CD8-positive, alpha-beta memory T cell (primary cell): ENCODE measurements at regions of chr1 and their contacts with region 1.

Region 1: GRCh38 chr1:77978969-77979876 is at the start of gene FUBP1:
- DNase-seq: peak; percentile 88 to 98 (median 96)
- H3K4me3 ChIP-seq: peak within 1 kb of the TSS; percentile 87
- H3K4me3 Mint-ChIP-seq: no peak within 1 kb of the TSS
- H3K27ac ChIP-seq: peak within 1 kb of the TSS; percentile 98
- H3K27ac Mint-ChIP-seq: no peak within 1 kb of the TSS
- H3K4me1 ChIP-seq: peaks cover 48% of the 10 kb centered on the region
- H3K4me1 Mint-ChIP-seq: peaks cover 43 to 52% (median 51%) of the 10 kb centered on the region in 3 donors
- H3K27me3 ChIP-seq: no peaks in the 10 kb centered on the region
- H3K27me3 Mint-ChIP-seq: no peaks in the 10 kb centered on the region
- total RNA-seq, gene FUBP1: 215 to 217 TPM

Region 2: DNA sequence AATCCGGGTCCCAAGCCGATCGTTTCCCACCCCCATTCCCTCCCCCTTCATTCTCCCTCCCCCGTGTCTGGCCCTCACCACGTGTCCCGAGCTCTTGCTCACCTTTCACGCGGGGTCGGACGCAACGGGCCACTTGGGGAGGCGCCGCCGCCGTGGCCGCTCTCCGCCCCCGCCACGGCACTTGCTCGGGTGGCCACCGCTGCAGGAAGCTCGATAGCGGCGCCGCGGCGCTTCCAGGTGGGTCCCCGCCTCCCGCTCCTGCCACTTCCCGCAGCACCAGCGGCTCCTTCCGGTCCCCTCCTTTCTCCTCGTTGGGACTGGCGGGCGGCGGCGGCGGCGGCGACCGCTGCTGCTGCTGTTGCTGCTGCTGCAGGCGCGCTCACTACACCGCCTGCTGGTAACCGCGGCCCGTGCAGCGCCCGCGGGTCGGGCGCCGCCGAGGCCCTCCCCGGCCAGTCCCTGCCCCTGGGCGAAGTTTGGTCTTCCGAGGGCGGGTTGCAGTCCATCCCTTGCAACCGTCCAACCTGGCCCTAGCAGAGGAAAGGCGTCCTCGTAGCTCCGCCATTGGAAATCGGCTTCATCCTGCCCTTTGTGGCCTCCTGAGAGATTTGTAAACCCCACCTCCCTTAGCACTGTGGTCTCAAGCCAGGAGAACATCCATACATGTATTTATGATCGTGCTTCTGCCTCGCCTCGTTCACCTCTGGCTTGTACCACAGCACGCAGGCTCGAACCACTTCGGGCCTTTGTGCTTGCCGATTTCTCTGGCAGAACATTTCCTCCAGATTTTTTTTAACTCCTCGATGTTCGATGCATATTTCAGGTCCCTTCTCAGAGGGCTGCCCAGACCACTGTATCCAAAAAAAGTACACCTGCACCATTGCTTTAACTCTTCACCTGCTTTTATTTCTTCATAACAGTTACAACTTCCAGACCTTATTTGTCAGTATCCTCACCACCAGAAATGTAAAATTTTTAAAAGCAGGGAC is 295.8 kb before region 1 on chr1:
- CTCF ChIA-PET with region 1: interaction called, 7 read pairs
- POLR2A ChIA-PET with region 1: interaction called, 20 read pairs
- DNase-seq: peak; percentile 90 to 95 (median 93)
- H3K4me3 ChIP-seq: peak overlapping the region; percentile 64
- H3K4me3 Mint-ChIP-seq: peak overlapping the region; percentile 89 to 98 (median 96)
- H3K27ac ChIP-seq: peak overlapping the region; percentile 84
- H3K27ac Mint-ChIP-seq: peak overlapping the region; percentile 93 to 98 (median 96)
- H3K4me1 ChIP-seq: peaks cover 31% of the 10 kb centered on the region
- H3K4me1 Mint-ChIP-seq: peaks cover 30 to 49% (median 40%) of the 10 kb centered on the region in 3 donors
- H3K27me3 ChIP-seq: no peaks in the 10 kb centered on the region
- H3K27me3 Mint-ChIP-seq: peaks cover 0 to 3% of the 10 kb centered on the region in 2 donors

Region 3: DNA sequence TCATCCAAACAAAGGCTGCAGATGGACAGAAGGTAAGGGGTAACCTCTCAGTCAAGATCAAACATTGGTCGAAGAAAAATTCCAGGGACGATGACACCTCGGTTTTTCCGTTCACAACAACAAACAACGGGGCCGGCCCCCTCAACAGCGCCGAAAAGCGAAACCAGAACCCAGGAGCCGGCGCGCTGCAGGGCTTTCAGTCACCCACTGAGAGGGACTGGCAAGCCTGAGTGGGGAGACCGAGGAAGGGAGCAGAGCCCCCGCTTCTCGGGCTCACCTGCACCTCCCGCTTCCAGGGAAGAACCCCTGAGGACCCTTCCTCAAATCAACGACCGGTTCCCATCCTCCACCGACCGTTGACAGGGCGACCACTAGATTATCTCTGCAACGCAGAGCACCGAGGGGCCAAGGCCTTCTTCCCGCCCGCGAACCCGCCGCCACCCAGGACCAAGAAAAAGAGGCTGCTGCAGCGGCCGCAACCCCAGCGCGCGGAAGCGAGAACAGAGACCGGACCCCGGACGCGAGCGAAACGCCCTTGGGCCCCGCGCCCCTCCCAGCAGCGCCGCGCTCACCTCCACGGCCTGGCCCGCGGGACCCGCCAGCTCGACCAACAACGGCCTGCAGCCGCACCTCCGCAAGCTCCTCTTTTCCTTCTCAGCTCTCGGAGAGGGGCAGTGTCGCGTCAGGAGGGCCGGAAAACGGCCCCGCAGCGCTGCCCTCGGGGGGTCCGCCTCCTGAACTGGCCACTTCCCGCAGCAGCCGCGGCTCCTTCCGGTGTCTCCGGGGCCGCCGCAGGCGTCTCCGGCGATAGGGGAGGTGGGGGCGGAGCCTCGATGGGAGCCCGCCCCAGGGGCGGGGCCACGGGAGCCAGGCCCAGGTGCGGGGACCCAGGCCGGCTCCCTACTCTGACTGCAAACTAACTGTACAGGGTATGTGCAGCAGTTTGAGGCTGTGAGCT is 219.9 kb before region 1 on chr1 and contains the start of gene USP33:
- CTCF ChIA-PET with region 1: no interaction called
- POLR2A ChIA-PET with region 1: interaction called, 14 read pairs
- DNase-seq: peak; percentile 87 to 93 (median 91)
- H3K4me3 ChIP-seq: peak within 1 kb of the TSS; percentile 59
- H3K4me3 Mint-ChIP-seq: peak within 1 kb of the TSS; percentile 96 to 99 (median 96)
- H3K27ac ChIP-seq: peak within 1 kb of the TSS; percentile 83
- H3K27ac Mint-ChIP-seq: peak within 1 kb of the TSS; percentile 93 to 99 (median 94)
- H3K4me1 ChIP-seq: peaks cover 45% of the 10 kb centered on the region
- H3K4me1 Mint-ChIP-seq: peaks cover 40 to 53% (median 51%) of the 10 kb centered on the region in 3 donors
- H3K27me3 ChIP-seq: no peaks in the 10 kb centered on the region
- H3K27me3 Mint-ChIP-seq: no peaks in the 10 kb centered on the region
- total RNA-seq, gene USP33: 41.8 to 43.1 TPM

Region 4: DNA sequence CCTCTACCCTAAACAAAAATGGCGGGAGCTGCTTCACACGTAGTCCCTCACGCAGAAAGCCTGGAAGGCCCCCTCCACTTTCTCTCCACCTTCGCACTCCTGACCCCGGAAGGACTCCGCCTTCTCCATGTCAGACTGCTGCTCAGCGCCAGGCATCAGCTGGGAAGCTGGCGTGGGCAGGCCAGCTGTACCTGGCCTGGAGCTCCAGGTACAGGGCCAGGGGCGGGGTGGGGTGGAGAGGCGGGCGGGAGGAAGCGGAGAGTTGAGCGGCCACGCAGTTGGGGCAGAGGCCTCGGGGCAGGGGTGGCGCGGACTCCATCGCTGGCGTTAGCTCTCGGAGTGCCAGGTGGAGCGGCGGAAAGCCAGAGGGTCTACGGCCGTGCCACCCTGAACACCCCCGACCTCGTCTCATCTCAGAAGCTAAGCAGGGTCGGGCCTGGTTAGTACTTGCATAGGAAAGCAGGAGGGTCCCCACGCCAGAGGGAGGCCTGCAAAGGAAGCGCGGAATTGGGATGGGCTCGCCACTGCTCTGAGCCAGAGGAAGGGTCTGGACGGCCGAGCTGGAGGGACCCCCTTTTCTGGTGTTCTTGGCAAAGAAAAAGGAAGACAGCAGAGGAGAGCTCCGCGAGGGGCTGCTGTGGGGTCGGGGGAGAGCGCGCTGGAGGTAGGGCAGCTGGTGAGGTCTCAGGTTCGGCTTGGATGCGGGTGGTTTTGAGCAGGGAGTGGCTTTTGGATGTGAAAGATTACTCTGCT is 199.5 kb before region 1 on chr1 and contains the start of gene MIGA1:
- CTCF ChIA-PET with region 1: no interaction called
- POLR2A ChIA-PET with region 1: interaction called, 11 read pairs
- DNase-seq: peak; percentile 77 to 92 (median 85)
- H3K4me3 ChIP-seq: peak within 1 kb of the TSS; percentile 81
- H3K4me3 Mint-ChIP-seq: peak within 1 kb of the TSS; percentile 90 to 96 (median 94)
- H3K27ac ChIP-seq: peak within 1 kb of the TSS; percentile 73
- H3K27ac Mint-ChIP-seq: peak within 1 kb of the TSS; percentile 81 to 96 (median 90)
- H3K4me1 ChIP-seq: peaks cover 32% of the 10 kb centered on the region
- H3K4me1 Mint-ChIP-seq: peaks cover 38 to 53% (median 49%) of the 10 kb centered on the region in 3 donors
- H3K27me3 ChIP-seq: no peaks in the 10 kb centered on the region
- H3K27me3 Mint-ChIP-seq: no peaks in the 10 kb centered on the region
- total RNA-seq, gene MIGA1: 10.2 to 11.7 TPM

Region 5: GRCh38 chr1:78004719-78005447 is 25.7 kb after region 1 on chr1 and contains the start of gene DNAJB4:
- CTCF ChIA-PET with region 1: interaction called, 27 read pairs
- POLR2A ChIA-PET with region 1: interaction called, 102 read pairs
- DNase-seq: peak; percentile 29 to 83 (median 80)
- H3K4me3 ChIP-seq: peak within 1 kb of the TSS; percentile 89
- H3K4me3 Mint-ChIP-seq: peak within 1 kb of the TSS; percentile 86 to 93 (median 90)
- H3K27ac ChIP-seq: peak within 1 kb of the TSS; percentile 92
- H3K27ac Mint-ChIP-seq: peak within 1 kb of the TSS; percentile 93 to 99 (median 98)
- H3K4me1 ChIP-seq: peaks cover 17% of the 10 kb centered on the region
- H3K4me1 Mint-ChIP-seq: peaks cover 25 to 65% (median 61%) of the 10 kb centered on the region in 3 donors
- H3K27me3 ChIP-seq: no peaks in the 10 kb centered on the region
- H3K27me3 Mint-ChIP-seq: peaks cover 0 to 3% of the 10 kb centered on the region in 2 donors
- total RNA-seq, gene DNAJB4: 8.1 to 10.6 TPM

Region 6: GRCh38 chr1:78156805-78157521 is 177.7 kb after region 1 on chr1:
- CTCF ChIA-PET with region 1: no interaction called
- POLR2A ChIA-PET with region 1: no interaction called
- DNase-seq: no peak
- H3K4me3 ChIP-seq: no peak overlapping the region
- H3K4me3 Mint-ChIP-seq: no peak overlapping the region
- H3K27ac ChIP-seq: no peak overlapping the region
- H3K27ac Mint-ChIP-seq: no peak overlapping the region
- H3K4me1 ChIP-seq: no peaks in the 10 kb centered on the region
- H3K4me1 Mint-ChIP-seq: peaks cover 0 to 2% (median 0%) of the 10 kb centered on the region in 3 donors
- H3K27me3 ChIP-seq: peaks cover 5% of the 10 kb centered on the region
- H3K27me3 Mint-ChIP-seq: peaks cover 7 to 40% of the 10 kb centered on the region in 2 donors